ENCODE measurements at regions of chr10 and their contacts with region 1.

Region 1: DNA sequence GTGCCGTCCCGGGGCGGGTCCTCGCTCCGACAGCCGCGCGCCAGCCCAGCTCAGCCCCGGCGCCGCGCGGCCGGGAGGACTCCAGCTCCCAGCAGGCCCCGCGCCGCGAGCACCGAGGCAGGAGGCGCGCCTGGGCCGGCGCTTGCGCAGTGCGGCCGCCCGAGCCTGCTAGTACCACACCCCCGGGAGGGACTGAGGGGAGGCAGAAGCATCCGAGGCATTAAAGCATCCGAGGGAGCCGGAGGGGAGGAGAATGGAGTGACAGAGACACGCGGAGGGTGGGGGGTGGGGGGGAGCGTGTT is at the start of gene GRK5:
- DNase-seq: peak; percentile 97
- H3K4me3 Mint-ChIP-seq: peak within 1 kb of the TSS; percentile 98
- H3K27ac Mint-ChIP-seq: peak within 1 kb of the TSS; percentile 100
- H3K4me1 Mint-ChIP-seq: peaks cover 41% of the 10 kb centered on the region
- H3K27me3 Mint-ChIP-seq: no peaks in the 10 kb centered on the region
- total RNA-seq, gene GRK5: 24.4 and 24.7 TPM in 2 replicates

Region 2: GRCh38 chr10:119178372-119179119 is 28.8 kb before region 1 on chr10 and contains the start of gene PRDX3:
- intact Hi-C with region 1: loop called (anchors 1 kb)
- DNase-seq: peak; percentile 89
- H3K4me3 Mint-ChIP-seq: peak within 1 kb of the TSS; percentile 97
- H3K27ac Mint-ChIP-seq: peak within 1 kb of the TSS; percentile 99
- H3K4me1 Mint-ChIP-seq: peaks cover 27% of the 10 kb centered on the region
- H3K27me3 Mint-ChIP-seq: no peaks in the 10 kb centered on the region
- total RNA-seq, gene PRDX3: 177 and 182 TPM in 2 replicates

Region 3: DNA sequence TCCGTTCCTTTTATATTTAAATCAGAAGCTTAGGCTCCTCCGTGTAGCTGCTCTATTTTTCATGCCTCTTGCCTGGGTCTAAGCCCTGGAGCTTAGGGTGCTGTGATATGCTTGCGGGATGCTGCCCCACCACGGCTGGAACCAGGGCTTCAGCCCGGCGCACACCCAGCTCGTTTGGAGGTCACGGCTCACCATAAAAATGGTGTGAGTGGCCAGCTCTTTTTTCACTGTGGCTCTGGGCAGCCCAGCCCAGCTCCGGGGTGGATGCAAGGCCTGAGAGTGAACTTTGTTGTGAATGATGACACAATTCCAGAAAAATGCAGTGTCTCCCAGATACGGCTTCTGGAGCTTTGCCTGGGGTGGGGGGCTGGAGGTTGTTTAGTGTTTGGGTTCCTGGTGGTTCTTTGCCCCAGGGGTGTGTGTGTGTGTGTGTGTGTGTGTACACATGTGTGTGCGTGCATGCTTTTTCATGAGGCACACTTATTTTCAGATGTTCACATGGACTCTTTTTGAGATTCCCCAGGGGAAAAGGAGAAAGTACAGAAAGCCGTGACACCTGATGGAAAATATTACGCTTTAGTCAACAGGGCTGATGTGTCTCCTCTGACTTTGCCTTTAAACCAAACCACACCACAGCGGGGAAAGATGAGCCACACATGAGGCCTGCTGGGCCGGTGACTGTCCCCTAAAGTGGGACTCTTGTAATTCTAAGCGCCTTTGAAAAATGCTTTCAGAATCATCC is 46.3 kb after region 1 on chr10:
- intact Hi-C with region 1: loop called (anchors 1 kb)
- DNase-seq: no peak
- H3K4me3 Mint-ChIP-seq: no peak overlapping the region
- H3K27ac Mint-ChIP-seq: peak overlapping the region; percentile 89
- H3K4me1 Mint-ChIP-seq: peaks cover 33% of the 10 kb centered on the region
- H3K27me3 Mint-ChIP-seq: no peaks in the 10 kb centered on the region

Region 4: DNA sequence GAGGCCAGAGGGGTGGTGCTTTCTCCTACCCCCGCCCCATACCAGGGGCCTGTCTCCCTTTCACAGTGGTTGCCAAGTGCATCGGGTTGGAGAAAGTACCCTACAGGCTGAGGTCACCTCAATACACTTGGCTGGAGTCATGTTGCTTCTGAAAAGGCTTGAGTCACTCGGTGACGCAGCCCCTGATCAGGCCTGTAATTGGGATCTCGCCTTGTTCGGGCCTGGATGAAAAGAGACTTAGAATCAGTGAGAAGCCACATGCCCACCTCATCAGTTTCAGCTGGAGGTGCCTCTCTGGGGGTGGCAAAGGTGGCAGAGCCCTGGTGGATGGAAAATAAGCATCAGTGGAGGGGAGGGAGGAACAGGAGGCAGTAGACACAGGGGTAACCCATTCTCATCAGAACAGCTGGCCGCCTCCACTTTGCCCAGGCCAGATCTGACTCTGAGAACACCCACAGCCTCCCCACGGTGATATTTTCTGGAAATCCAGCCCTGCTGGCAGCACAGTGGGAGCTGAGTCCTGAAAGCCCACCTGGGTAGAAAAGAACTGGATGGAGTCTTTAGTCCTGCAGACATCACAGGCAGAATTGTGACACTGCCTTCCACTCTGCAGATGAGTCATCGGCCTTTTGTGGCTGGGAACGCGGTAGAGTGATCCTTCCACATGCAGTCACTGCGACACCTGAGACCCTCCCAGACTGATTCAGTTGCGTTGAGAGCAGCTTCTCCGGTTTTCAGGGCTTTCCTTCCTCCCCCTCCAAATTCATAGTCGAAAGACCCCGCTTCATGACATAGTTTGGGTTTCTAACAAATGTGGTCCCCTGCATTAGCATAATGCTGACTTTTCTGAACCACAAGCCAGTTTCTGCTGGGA is 108.0 kb after region 1 on chr10:
- intact Hi-C with region 1: loop called (anchors 1 kb)
- DNase-seq: peak; percentile 63
- H3K4me3 Mint-ChIP-seq: peak overlapping the region; percentile 51
- H3K27ac Mint-ChIP-seq: peak overlapping the region; percentile 95
- H3K4me1 Mint-ChIP-seq: peaks cover 51% of the 10 kb centered on the region
- H3K27me3 Mint-ChIP-seq: peaks cover 6% of the 10 kb centered on the region

Region 5: GRCh38 chr10:119496273-119496672 is 289.0 kb after region 1 on chr10:
- intact Hi-C with region 1: loop called (anchors 5 kb)
- DNase-seq: peak; percentile 22
- H3K4me3 Mint-ChIP-seq: no peak overlapping the region
- H3K27ac Mint-ChIP-seq: peak overlapping the region; percentile 60
- H3K4me1 Mint-ChIP-seq: peaks cover 68% of the 10 kb centered on the region
- H3K27me3 Mint-ChIP-seq: no peaks in the 10 kb centered on the region

Measured in activated T-helper 2 cell treated with anti-CD3 and anti-CD28 coated beads, Interferon-gamma antibody, Interleukin-2, Interleukin-4, amounts not matched to agents 10 μg/mL and 5 μg/mL and 100 μg/mL, durations not matched to agents 14 hours and 24 hours and 36 hours (primary cell).